Tibial artery (tissue), 4 donors: ENCODE measurements at regions of chr16 and their contacts with region 1.

Region 1: GRCh38 chr16:57734925-57735754 is 430 bp upstream of the KATNB1 start:
- DNase-seq: peak; percentile 99
- H3K4me3 ChIP-seq: peak overlapping the region; percentile 78 to 84
- H3K27ac ChIP-seq: peak overlapping the region; percentile 86 to 93
- H3K4me1 ChIP-seq: peaks cover 0 to 40% (median 23%) of the 10 kb centered on the region in 4 donors
- H3K27me3 ChIP-seq: no peaks in the 10 kb centered on the region
- CTCF ChIP-seq: peak in 1 of 2 experiments; percentile 14

Region 2: GRCh38 chr16:57576429-57576870 is 158.7 kb before region 1 on chr16:
- intact Hi-C with region 1: no loop called
- DNase-seq: peak; percentile 76 to 78
- H3K4me3 ChIP-seq: no peak overlapping the region
- H3K27ac ChIP-seq: no peak overlapping the region
- H3K4me1 ChIP-seq: peaks cover 0 to 5% (median 2%) of the 10 kb centered on the region in 4 donors
- H3K27me3 ChIP-seq: peaks cover 0 to 37% of the 10 kb centered on the region in 2 donors
- CTCF ChIP-seq: peak; percentile 80 to 94

Region 3: GRCh38 chr16:57773655-57774295 is 38.6 kb after region 1 on chr16:
- intact Hi-C with region 1: no loop called
- DNase-seq: no peak
- H3K4me3 ChIP-seq: no peak overlapping the region
- H3K27ac ChIP-seq: no peak overlapping the region
- H3K4me1 ChIP-seq: no peaks in the 10 kb centered on the region
- H3K27me3 ChIP-seq: no peaks in the 10 kb centered on the region
- CTCF ChIP-seq: no peak

Region 4: GRCh38 chr16:57802341-57803133 is 67.4 kb after region 1 on chr16 and contains the start of gene KIFC3:
- intact Hi-C with region 1: loop called (anchors 5 kb)
- DNase-seq: peak; percentile 82 to 92
- H3K4me3 ChIP-seq: peak within 1 kb of the TSS; percentile 60 to 73
- H3K27ac ChIP-seq: peak within 1 kb of the TSS; percentile 72 to 83
- H3K4me1 ChIP-seq: peaks cover 0 to 44% (median 32%) of the 10 kb centered on the region in 4 donors
- H3K27me3 ChIP-seq: no peaks in the 10 kb centered on the region
- CTCF ChIP-seq: peak; percentile 27 to 47

Region 5: GRCh38 chr16:58000706-58001676 is 265.9 kb after region 1 on chr16 and contains the start of gene USB1:
- intact Hi-C with region 1: loop called (anchors 5 kb)
- DNase-seq: peak; percentile 75 to 92
- H3K4me3 ChIP-seq: peak within 1 kb of the TSS; percentile 79 to 91
- H3K27ac ChIP-seq: peak within 1 kb of the TSS; percentile 90 to 98
- H3K4me1 ChIP-seq: peaks cover 5 to 48% (median 30%) of the 10 kb centered on the region in 4 donors
- H3K27me3 ChIP-seq: no peaks in the 10 kb centered on the region
- CTCF ChIP-seq: peak; percentile 54 to 57

Region 6: DNA sequence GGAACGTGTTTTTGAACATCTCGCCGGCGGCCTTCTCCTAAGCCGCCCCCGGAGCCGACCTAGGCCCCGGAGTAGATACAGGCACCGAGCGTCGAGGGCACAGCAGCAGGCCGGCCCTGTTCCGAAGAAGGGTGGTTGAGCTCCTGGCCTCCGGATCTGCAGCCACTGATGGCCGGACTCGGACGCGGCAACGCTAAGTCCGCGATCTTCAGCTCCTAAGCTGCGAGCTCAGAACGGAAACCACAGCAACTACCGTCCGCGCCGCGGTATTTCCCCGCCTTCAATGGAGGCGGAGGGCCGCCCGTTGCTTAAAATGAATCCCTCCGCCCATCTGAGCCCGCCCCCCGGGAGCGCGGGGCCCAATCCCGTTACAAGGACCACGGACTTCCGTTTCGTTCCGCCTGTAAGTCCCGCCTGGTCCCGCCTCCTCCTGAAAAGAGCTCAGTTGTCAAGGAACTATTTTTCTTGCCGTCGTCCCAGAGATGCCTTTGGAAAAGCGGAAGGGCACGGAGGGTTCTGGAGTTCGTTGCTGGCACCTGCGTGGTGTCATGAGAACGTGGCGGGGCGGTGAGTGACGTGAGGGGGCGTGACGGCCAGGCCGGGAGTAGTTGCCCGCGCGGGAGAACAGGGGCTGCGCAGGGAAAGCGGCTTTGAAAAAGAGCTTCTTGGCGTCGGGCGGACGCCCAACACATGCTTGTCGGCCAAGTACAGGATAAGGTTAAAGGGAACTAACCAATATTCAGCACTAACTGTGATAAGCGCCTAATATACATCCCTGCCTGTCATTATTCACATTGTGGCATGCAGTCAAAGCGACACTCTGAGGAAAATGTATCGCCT is 394.2 kb after region 1 on chr16 and contains the start of gene CFAP20:
- intact Hi-C with region 1: loop called (anchors 10 kb)
- DNase-seq: peak; percentile 99
- H3K4me3 ChIP-seq: peak within 1 kb of the TSS; percentile 72 to 93
- H3K27ac ChIP-seq: peak within 1 kb of the TSS; percentile 80 to 94
- H3K4me1 ChIP-seq: peaks cover 0 to 39% (median 29%) of the 10 kb centered on the region in 4 donors
- H3K27me3 ChIP-seq: no peaks in the 10 kb centered on the region
- CTCF ChIP-seq: no peak